Endothelial cell of umbilical vein (primary cell): ENCODE measurements at regions of chr9 and their contacts with region 1.

Region 1: GRCh38 chr9:15606643-15607472 is 54.0 kb downstream of the CCDC171 start:
- DNase-seq: peak; percentile 70
- H3K4me3 ChIP-seq: no peak overlapping the region
- H3K27ac ChIP-seq: peak overlapping the region; percentile 41
- H3K4me1 ChIP-seq: peaks cover 19% of the 10 kb centered on the region
- H3K27me3 ChIP-seq: no peaks in the 10 kb centered on the region
- CTCF ChIP-seq: peak; percentile 26 to 32
- POLR2A ChIP-seq: no peak

Region 2: DNA sequence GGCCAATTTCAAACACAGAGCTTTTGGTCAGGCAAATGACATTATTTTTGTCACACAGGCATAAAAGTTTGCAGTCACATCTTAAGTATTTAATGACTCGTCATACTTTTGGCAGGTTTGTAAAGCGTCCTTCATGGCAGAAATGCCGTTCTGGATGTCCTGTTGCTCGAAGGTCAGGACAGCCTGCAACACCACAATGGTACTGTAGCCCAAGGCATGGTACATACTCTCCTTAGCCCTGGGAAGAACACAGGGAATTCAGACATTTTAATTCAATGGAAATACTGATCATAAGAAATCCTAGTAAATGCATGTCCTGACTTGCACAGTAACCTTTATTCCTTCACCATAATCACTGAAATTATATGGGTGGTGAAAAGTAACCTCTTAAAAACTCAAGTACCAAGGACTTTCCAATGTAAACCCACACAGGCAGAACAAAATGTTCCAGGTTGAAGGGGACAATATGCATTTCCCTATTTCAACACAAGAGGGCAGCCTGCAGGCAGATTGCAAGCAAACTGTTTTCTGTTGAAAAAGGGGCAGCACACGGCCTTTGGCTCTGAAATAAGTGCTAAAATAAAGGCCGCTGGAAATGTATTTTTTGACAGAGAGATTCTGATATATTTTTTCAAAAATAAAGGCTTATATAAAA is 395.6 kb before region 1 on chr9:
- CTCF ChIA-PET with region 1: interaction called, 40 read pairs
- POLR2A ChIA-PET with region 1: no interaction called
- dilution Hi-C with region 1: no loop called
- intact Hi-C with region 1: loop called (anchors 1 kb)
- DNase-seq: peak; percentile 80
- H3K4me3 ChIP-seq: no peak overlapping the region
- H3K27ac ChIP-seq: no peak overlapping the region
- H3K4me1 ChIP-seq: peaks cover 3% of the 10 kb centered on the region
- H3K27me3 ChIP-seq: no peaks in the 10 kb centered on the region
- CTCF ChIP-seq: peak; percentile 79 to 81
- POLR2A ChIP-seq: no peak

Region 3: DNA sequence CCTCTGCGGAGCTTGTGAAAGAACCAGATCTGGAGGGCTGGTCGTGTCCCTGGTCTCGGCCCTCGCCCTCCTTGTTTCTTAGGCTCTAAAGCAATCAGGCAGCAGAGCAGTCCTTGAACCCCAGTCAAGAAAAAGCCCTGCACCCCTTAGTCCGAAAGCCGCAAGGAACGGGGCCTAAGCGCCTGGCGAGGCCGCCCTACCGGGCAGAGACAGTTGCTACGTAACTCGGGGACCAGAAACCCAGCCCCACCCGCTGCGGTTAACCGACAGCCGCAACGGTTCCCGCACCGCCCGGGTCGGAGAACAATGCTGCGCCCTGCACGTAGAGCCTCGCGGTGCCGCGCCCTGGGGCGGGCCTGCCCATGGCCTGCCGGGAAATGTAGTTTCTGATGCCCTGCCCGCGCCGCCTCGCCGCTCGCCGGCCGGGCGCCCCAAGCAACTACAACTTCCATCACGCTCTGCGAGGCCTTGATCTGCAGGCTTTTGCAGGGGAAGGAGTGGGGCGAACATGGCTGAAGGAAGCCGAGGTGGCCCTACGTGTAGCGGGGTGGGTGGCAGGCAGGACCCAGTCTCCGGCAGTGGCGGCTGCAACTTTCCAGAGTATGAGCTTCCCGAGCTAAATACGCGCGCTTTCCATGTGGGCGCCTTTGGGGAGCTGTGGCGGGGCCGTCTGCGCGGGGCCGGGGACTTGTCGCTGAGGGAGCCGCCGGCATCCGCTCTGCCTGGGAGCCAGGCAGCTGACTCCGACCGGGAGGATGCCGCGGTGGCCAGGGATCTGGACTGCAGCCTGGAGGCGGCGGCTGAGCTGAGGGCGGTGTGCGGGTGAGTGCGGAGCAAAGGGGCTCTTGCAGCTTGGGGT is 184.3 kb before region 1 on chr9 and contains the start of gene SNAPC3:
- CTCF ChIA-PET with region 1: no interaction called
- POLR2A ChIA-PET with region 1: no interaction called
- dilution Hi-C with region 1: no loop called
- intact Hi-C with region 1: loop called (anchors 2 kb)
- DNase-seq: peak; percentile 98
- H3K4me3 ChIP-seq: peak within 1 kb of the TSS; percentile 80 to 100 (median 94)
- H3K27ac ChIP-seq: peak within 1 kb of the TSS; percentile 80
- H3K4me1 ChIP-seq: peaks cover 11% of the 10 kb centered on the region
- H3K27me3 ChIP-seq: no peaks in the 10 kb centered on the region
- CTCF ChIP-seq: no peak
- POLR2A ChIP-seq: peak; percentile 88
- total RNA-seq, gene SNAPC3: 30.9 and 32.6 TPM in 2 replicates

Region 4: DNA sequence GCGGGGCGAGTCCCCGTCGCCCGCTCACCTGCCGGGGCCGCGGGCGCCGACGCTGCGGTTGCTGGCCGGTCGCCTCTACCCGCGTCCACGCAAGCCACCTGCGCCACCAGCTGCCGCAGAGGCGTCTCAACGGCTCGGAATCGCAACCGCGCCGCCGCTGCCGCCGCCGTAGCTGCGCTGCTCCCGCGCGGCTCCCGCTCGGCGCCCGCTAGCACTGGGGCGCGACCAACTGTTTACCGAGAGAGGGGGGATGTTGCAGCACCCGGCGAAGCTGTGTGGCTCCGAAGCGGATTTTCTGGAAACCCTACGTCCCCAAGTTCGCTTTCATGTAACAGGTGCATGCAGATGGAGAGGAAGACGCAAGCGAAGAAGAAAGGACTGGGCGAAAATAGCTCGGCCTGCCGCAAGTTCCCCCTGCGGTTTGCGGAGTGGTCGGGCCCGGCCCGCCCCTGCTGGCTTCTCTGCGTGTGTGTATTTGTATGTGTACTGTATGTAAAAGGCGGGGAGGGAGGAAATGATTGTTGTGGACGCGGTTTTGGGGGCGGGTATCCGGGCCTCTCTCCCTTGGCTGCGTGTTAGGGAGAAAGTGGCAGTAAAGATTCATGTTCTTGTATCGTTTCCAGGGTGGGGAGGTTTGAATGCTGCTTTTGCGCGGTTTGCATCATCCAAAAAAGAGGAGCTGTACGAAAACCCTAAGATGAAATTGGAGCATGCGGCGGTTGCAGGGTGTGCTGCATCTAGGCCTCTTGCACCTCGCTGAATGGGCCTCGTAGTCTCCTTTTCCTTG is 95.9 kb before region 1 on chr9 and contains the start of gene PSIP1:
- CTCF ChIA-PET with region 1: interaction called, 6 read pairs
- POLR2A ChIA-PET with region 1: no interaction called
- dilution Hi-C with region 1: no loop called
- intact Hi-C with region 1: loop called (anchors 2 kb)
- DNase-seq: peak; percentile 87
- H3K4me3 ChIP-seq: peak within 1 kb of the TSS; percentile 76 to 91 (median 77)
- H3K27ac ChIP-seq: peak within 1 kb of the TSS; percentile 99
- H3K4me1 ChIP-seq: peaks cover 19% of the 10 kb centered on the region
- H3K27me3 ChIP-seq: no peaks in the 10 kb centered on the region
- CTCF ChIP-seq: no peak
- POLR2A ChIP-seq: peak; percentile 78
- total RNA-seq, gene PSIP1: 69.5 and 76.7 TPM in 2 replicates

Region 5: DNA sequence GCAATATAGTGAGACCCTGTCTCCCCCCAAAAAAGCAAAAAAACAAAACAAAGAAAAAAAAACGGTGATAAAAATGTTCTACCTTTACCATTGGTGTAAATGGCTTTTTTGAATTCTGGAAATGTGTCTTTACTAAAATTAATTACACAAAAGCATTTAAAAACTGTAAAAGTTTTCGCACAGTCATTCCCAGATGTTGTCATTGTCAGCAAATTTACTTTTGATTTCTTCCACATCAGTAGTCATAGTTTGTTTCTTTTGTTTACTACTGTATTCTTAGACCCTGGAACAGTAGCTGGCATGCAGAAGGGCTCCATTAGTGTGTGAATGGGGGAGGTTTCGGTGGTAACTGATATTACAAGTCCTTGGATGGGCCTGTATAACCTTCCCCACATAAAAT is 14.5 kb before region 1 on chr9:
- CTCF ChIA-PET with region 1: interaction called, 13 read pairs
- POLR2A ChIA-PET with region 1: no interaction called
- dilution Hi-C with region 1: no loop called
- intact Hi-C with region 1: no loop called
- DNase-seq: no peak
- H3K4me3 ChIP-seq: no peak overlapping the region
- H3K27ac ChIP-seq: no peak overlapping the region
- H3K4me1 ChIP-seq: no peaks in the 10 kb centered on the region
- H3K27me3 ChIP-seq: no peaks in the 10 kb centered on the region
- CTCF ChIP-seq: no peak
- POLR2A ChIP-seq: no peak